WTC11 (cell line): ENCODE measurements at regions of chr2 and their contacts with region 1.

Region 1: GRCh38 chr2:104872866-104873688 is 19.2 kb downstream of the POU3F3 start:
- DNase-seq: peak; percentile 71
- ATAC-seq: peak; percentile 73
- H3K4me3 Mint-ChIP-seq: peak overlapping the region; percentile 79
- H3K27ac Mint-ChIP-seq: no peak overlapping the region
- H3K4me1 Mint-ChIP-seq: peaks cover 31% of the 10 kb centered on the region
- H3K27me3 Mint-ChIP-seq: peaks cover 96% of the 10 kb centered on the region
- CTCF ChIP-seq: peak; percentile 37; the same call in 1 of the 2 replicates

Region 2: DNA sequence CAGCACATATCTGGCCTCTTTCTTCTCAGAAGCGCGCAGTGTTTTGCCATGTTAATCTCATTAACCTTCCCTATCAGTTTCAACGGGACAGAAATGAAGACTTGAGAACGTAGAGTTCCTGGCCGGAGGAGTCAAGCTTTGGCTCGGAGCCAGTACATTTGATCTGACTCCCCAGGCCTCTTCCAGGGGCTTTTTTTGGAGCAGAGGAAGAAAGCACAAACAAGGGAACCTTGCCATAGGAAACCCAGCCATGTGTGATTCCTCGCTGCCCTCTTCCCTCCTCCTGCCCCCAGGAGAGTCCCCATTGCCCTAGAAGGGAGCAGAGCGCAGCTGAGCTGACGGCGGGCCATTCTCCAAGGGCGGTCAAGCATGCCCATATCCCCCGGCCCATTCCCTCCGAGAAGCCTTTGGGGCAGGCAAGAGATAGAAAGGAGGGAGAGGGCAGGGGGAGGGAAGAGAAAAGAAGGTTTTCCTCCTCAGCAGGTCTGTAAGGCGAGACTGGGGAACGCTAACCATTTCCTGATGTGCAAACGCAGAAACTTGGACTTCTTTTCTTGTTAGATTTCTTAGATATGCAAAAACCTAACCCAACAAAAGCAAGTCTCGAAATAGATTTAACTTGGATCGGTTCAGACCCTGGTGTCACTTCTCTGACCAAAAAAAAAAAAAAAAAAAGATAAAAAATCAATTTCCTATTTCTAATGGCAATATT is 82.8 kb before region 1 on chr2:
- CTCF ChIA-PET with region 1: no interaction called
- POLR2A ChIA-PET with region 1: no interaction called
- DNase-seq: peak; percentile 53
- ATAC-seq: peak; percentile 95
- H3K4me3 Mint-ChIP-seq: peak overlapping the region; percentile 37
- H3K27ac Mint-ChIP-seq: no peak overlapping the region
- H3K4me1 Mint-ChIP-seq: peaks cover 28% of the 10 kb centered on the region
- H3K27me3 Mint-ChIP-seq: peaks cover 8% of the 10 kb centered on the region
- CTCF ChIP-seq: no peak

Region 3: GRCh38 chr2:104944495-104944894 is 71.4 kb after region 1 on chr2:
- CTCF ChIA-PET with region 1: interaction called, 10 read pairs
- POLR2A ChIA-PET with region 1: no interaction called
- DNase-seq: peak; percentile 23
- ATAC-seq: peak; percentile 65; the same call in 1 of the 2 replicates
- H3K4me3 Mint-ChIP-seq: no peak overlapping the region
- H3K27ac Mint-ChIP-seq: no peak overlapping the region
- H3K4me1 Mint-ChIP-seq: peaks cover 7% of the 10 kb centered on the region
- H3K27me3 Mint-ChIP-seq: no peaks in the 10 kb centered on the region
- CTCF ChIP-seq: no peak